Ovary (tissue), 10 donors: ENCODE measurements at regions of chr18 and their contacts with region 1.

Region 1: DNA sequence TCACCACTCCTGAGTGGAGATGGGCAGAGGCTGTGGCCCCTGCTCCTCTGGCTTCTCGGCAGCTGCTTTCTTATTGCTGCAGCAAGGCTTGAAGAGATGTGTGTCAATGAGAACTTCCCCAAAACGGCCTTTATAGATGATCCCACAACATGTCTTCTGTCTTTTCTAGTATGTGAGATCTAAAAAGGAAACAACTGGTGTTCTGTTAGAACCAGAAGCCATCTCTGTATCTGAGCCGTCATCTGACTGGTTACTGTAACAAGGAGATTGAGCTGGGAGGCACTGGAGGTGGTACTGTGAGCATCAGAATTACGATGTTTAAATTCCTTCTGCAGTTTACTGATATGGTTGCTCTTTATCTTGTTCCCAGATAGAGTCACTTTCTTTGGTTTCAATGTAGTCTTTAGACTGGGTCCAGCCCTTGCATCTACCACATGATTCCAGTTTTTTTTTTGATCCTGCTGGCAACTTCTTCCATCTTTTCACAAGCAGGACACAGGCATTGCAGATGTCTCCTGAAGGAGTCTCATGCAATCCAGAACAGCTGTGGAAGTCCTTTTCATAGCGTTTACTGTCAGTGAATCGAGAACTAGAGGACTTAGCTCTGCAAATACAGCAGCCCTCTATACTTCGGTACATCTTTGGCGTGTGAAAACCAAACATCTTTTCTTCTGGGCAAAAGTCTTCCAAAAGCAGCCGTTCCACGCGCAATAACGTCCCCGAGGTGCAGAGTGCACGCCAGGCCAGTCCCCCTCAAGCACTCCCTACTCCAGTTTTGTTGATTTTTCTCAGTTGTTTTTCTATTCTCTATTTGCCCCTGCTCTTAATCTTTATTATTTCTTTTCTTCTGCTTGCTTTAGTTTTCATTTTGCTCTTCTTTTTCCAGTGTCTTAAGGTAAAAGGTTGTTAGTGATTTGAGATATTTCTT is 29.7 kb downstream of the TAF4B start:
- DNase-seq: no peak
- H3K4me3 ChIP-seq: no peak overlapping the region
- H3K27ac ChIP-seq: no peak overlapping the region
- H3K4me1 ChIP-seq: no peaks in the 10 kb centered on the region
- H3K27me3 ChIP-seq: no peaks in the 10 kb centered on the region
- CTCF ChIP-seq: no peak
- EP300 ChIP-seq: no peak
- POLR2A ChIP-seq: no peak

Region 2: GRCh38 chr18:24964216-24964615 is 1291.7 kb before region 1 on chr18:
- intact Hi-C with region 1: loop called in 1 of 4 experiments (anchors 10 kb)
- DNase-seq: no peak
- H3K4me3 ChIP-seq: no peak overlapping the region
- H3K27ac ChIP-seq: no peak overlapping the region
- H3K4me1 ChIP-seq: no peaks in the 10 kb centered on the region
- H3K27me3 ChIP-seq: no peaks in the 10 kb centered on the region
- CTCF ChIP-seq: no peak
- EP300 ChIP-seq: no peak
- POLR2A ChIP-seq: no peak